WTC11 (cell line): ENCODE measurements at regions of chr1 and their contacts with region 1.

Region 1: DNA sequence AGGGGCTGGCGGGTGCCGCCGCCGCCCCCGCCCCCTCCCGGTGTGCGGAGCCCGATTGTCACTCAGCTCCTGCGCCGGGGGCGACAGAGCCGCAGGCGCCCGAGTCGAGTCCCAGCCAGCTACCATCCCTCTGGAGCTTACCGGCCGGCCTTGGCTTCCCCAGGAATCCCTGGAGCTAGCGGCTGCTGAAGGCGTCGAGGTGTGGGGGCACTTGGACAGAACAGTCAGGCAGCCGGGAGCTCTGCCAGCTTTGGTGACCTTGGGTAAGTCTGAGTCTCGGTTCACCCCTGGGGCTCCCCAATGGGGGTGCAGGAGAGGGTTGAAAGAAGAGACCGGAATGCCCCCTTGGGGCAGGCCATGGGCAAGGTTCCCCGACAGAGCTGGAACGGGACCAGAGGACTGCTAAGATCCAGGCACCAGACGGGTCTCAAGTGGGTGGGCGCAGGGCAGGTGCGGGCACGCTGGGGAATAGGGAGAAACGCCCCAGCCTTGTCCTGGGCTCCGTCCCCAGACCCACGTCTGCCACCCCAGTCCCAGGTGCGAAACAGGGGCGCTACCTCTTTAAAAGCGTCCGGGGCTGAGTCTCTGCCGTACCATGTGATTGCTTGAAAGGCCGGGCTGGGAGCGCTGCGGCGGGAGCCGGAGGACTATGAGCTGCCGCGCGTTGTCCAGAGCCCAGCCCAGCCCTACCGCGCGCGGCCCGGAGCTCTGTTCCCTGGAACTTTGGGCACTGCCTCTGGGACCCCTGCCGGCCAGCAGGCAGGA is at the start of gene ADORA1:
- DNase-seq: peak; percentile 80
- ATAC-seq: peak; percentile 87
- H3K4me3 Mint-ChIP-seq: peak within 1 kb of the TSS; percentile 67
- H3K27ac Mint-ChIP-seq: no peak within 1 kb of the TSS
- H3K4me1 Mint-ChIP-seq: peaks cover 33% of the 10 kb centered on the region
- H3K27me3 Mint-ChIP-seq: peaks cover 37% of the 10 kb centered on the region
- CTCF ChIP-seq: no peak
- total RNA-seq, gene ADORA1: 1.8 to 2.7 TPM (median 2.6 TPM) in 3 replicates

Region 2: GRCh38 chr1:203046984-203047630 is 80.7 kb before region 1 on chr1:
- CTCF ChIA-PET with region 1: interaction called, 11 read pairs
- POLR2A ChIA-PET with region 1: no interaction called
- DNase-seq: no peak
- ATAC-seq: no peak
- H3K4me3 Mint-ChIP-seq: no peak overlapping the region
- H3K27ac Mint-ChIP-seq: no peak overlapping the region
- H3K4me1 Mint-ChIP-seq: peaks cover 20% of the 10 kb centered on the region
- H3K27me3 Mint-ChIP-seq: no peaks in the 10 kb centered on the region; the same call in 1 of the 2 replicates
- CTCF ChIP-seq: no peak

Region 3: DNA sequence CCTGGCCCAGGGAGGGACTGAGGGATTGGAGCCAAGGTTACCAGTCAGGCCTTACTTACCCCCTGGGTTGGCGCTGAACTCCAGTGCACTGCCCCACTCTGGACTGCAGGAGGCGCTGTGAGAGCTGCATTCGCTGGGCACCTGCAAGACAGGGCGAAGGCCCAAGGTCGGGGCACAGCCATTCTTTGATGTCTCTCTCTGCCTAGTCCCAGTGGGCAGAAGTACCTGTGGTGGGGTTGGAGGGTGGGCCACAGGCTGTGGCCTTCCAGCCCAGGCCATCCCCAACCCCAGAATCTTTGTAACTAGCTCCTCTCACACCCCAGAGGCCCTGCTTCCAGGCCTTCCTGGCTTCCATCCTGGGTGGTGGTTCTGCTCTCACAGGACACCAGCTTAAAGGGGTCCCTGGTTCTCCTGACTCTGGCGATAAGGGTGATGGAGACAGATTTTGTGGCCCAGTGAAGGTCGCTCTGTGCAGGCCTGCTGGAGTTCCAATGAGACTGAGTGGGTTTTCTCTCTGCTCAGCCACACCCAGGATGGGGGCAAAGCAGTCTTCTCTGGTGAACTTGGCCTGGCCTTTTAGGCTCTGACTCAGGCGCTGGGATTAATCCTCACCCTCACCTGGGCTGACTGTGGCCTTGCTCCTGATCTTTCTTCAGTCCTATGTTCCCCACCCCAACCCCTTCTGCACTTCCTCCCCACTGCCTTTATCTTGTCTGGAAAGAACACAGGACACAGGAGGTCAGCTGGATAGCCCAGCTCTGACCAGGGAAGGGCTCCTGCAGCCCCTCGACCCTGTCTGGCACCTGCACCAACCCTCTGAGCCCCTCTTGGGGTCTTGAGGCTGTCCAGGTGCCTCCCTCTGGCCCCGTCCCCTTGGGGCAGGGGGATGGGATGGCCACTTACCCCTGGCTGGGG is 43.0 kb before region 1 on chr1:
- CTCF ChIA-PET with region 1: interaction called, 60 read pairs
- POLR2A ChIA-PET with region 1: no interaction called
- DNase-seq: peak; percentile 84
- ATAC-seq: peak; percentile 59
- H3K4me3 Mint-ChIP-seq: no peak overlapping the region
- H3K27ac Mint-ChIP-seq: no peak overlapping the region
- H3K4me1 Mint-ChIP-seq: peaks cover 34% of the 10 kb centered on the region
- H3K27me3 Mint-ChIP-seq: no peaks in the 10 kb centered on the region; the same call in 1 of the 2 replicates
- CTCF ChIP-seq: peak; percentile 88

Region 4: GRCh38 chr1:203148125-203148524 is 20.3 kb after region 1 on chr1:
- CTCF ChIA-PET with region 1: interaction called, 184 read pairs
- POLR2A ChIA-PET with region 1: interaction called, 3 read pairs
- DNase-seq: peak; percentile 44
- ATAC-seq: peak; percentile 50
- H3K4me3 Mint-ChIP-seq: no peak overlapping the region
- H3K27ac Mint-ChIP-seq: no peak overlapping the region
- H3K4me1 Mint-ChIP-seq: peaks cover 87% of the 10 kb centered on the region
- H3K27me3 Mint-ChIP-seq: no peaks in the 10 kb centered on the region
- CTCF ChIP-seq: no peak

Region 5: GRCh38 chr1:203172128-203173010 is 44.5 kb after region 1 on chr1:
- CTCF ChIA-PET with region 1: interaction called, 79 read pairs
- POLR2A ChIA-PET with region 1: interaction called, 6 read pairs
- DNase-seq: peak; percentile 88
- ATAC-seq: peak; percentile 91
- H3K4me3 Mint-ChIP-seq: no peak overlapping the region
- H3K27ac Mint-ChIP-seq: no peak overlapping the region
- H3K4me1 Mint-ChIP-seq: peaks cover 11% of the 10 kb centered on the region
- H3K27me3 Mint-ChIP-seq: no peaks in the 10 kb centered on the region
- CTCF ChIP-seq: peak; percentile 96

Region 6: DNA sequence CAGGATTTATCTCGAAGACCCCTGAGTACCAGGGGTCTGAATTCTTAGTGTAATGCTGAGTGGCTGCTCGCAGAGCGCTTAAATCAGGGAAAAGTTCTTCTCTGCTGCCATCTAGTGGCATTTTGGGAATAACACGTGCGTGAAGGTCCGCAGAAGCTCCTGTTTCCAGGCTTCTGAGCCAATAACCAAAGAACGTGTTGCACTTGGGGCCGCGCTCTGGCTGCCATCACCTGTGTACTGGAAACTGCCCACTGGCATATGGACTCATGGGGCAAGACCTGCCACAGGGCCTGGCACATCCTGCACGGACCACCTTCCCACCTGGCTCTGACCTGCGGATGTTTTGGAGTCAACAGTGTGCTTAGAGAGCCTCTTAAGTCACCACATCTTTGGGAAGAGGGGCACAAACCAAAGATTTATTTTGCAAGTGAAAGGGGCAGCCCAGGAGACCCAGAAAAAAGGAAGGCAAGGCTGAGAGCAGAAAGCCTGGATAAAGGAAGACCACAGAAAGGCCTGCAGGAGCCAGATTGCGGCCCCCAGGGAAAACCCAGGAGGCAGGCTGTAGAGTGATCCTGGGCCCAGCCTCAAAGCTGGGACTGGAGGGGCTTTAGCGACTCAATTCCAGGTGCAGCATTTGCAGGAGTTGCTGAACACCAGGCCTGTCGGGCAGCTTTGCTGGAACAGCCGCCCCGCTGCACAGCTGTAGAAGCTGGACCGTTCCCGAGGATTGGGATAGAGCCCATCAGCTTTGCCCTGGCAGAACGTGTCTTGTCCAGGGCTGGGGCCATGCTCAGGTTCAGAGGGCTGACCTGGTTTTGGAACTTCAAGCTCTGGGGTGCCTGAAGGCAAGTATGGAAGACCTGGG is 88.7 kb after region 1 on chr1:
- CTCF ChIA-PET with region 1: interaction called, 132 read pairs
- POLR2A ChIA-PET with region 1: no interaction called
- DNase-seq: peak; percentile 75
- ATAC-seq: peak; percentile 75
- H3K4me3 Mint-ChIP-seq: peak overlapping the region; percentile 29
- H3K27ac Mint-ChIP-seq: peak overlapping the region; percentile 34
- H3K4me1 Mint-ChIP-seq: peaks cover 17% of the 10 kb centered on the region
- H3K27me3 Mint-ChIP-seq: peaks cover 6% of the 10 kb centered on the region
- CTCF ChIP-seq: peak; percentile 75

Region 7: DNA sequence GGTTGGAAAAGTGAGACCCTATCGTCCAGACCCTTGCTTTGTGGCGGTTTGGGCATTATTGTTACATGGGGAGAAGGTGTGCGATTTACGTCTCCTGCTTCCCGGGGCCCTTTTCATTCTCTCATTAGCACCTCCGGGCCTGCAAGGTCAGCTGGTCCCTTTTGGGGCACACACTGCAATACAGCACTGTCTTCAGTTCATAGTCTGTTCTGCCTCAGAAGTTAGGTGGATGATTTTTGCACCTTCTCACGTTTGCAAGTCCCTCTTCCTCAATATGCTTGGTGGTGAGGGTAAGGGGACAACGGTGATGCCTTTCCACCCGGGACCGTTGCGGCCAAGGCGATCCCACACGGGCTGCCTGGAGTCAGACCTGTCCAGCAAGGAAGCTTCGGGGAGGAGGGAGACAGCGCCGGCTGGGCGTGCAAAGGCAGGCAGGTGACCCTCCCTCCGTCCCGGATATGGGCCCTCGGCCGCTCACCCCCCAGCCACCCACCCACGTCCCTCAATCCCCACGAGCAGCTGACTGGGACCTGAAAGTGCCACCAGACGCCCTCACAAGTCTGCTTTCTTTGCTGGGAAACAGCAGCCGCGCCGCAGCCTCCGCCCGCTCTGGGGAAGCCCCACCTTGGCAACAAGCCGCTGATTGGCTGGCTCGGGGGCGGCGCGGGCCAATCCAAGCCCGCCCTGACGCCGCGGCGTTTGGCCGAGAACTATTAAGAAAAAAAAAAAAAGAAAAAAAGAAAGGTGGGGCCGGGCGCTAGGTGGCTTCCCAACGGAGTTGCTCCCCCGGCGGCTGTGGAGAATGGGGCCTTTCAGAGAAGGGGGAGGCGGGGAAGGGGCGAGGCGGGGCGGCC is 199.2 kb after region 1 on chr1:
- CTCF ChIA-PET with region 1: interaction called, 13 read pairs
- POLR2A ChIA-PET with region 1: no interaction called
- DNase-seq: peak; percentile 91
- ATAC-seq: peak; percentile 85
- H3K4me3 Mint-ChIP-seq: peak overlapping the region; percentile 69
- H3K27ac Mint-ChIP-seq: no peak overlapping the region
- H3K4me1 Mint-ChIP-seq: peaks cover 50% of the 10 kb centered on the region
- H3K27me3 Mint-ChIP-seq: peaks cover 62% of the 10 kb centered on the region
- CTCF ChIP-seq: no peak